PC-9 (cell line): ENCODE measurements at regions of chr4 and their contacts with region 1.

Region 1: DNA sequence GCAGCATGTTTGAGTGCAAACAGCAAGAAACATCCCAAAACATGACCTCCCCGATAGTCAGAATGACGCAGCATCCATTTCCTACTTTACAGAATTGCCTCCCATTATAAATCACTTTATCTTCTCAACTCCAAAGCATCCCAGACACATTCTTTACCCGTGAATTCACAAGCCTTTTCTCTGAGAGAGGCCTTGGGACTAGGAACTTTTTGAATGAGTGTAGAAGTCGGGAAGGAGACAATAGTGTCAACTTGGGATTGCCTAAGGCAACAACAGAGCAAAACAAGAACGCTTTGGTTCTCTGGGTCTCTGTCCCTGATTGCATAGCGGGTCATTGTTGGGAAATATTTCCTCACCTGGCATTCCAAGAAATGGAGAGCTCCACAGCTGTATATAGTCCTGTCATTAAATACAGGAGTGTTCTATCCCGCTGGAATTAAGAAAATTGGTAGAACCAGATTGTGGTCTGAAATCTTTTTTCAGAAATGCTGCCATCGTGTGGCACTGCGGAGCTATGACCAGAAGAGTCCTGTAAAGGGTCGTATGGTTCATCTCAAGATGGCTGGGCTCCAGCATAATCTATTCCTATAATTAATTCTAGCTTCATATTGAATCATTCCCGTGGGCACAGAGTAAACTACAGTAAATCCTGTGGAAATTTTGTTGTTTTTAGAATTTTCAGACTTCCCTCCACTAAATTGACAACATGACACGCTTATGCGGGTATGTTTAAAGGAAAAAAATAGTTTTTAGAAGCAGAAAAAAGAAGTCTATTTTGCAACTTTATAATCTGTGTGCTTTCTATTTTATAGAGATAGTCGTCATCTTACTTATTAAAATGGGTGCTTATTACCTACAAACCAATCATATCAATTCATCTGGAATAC is 2.0 kb upstream of the SPP1 start:
- DNase-seq: peak; percentile 41 to 50
- H3K4me3 ChIP-seq: no peak overlapping the region; the same call in 1 of the 2 replicates
- H3K27ac ChIP-seq: peak overlapping the region; percentile 91
- H3K4me1 ChIP-seq: peaks cover 30% of the 10 kb centered on the region
- H3K27me3 ChIP-seq: no peaks in the 10 kb centered on the region
- CTCF ChIP-seq: peak; percentile 74

Region 2: GRCh38 chr4:87895964-87896621 is 77.4 kb before region 1 on chr4:
- CTCF ChIA-PET with region 1: no interaction called
- POLR2A ChIA-PET with region 1: no interaction called
- intact Hi-C with region 1: loop called (anchors 1 kb)
- DNase-seq: peak; percentile 45 to 83
- H3K4me3 ChIP-seq: no peak overlapping the region
- H3K27ac ChIP-seq: peak overlapping the region; percentile 82
- H3K4me1 ChIP-seq: peaks cover 23% of the 10 kb centered on the region
- H3K27me3 ChIP-seq: no peaks in the 10 kb centered on the region
- CTCF ChIP-seq: no peak